Adrenal gland (tissue), 19 donors: ENCODE measurements at regions of chr14 and their contacts with region 1.

Region 1: DNA sequence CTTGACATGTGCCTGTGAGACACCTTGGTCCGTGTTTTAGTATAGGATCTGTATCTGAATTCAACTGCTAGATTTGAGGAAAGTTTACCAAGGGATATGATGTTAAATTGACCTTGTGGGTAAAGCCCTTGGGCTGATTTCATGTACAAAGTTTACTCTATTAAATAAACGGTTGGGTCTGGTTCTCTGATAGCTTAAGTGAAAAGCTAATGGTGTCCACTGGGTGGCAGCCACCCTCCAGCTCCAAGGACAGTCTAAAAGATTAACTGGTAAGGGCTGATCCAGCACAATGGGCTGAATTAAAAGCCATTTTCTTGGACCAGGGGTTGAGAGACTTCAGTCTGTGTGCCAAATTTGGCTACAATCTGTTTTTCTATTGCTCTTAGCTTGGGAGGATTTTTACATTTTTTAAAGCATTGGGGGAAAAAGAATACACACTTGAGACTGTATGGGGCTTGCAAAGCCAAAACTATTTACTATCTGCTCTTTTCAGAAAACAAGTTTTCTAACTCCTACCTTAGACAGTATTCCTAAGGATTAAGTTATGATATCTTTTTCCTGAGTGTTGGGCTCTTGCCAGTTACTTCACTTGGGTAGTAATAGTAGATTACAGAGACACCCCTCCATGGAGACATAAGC is 116.5 kb downstream of the GPHN start:
- DNase-seq: peak; percentile 48 to 84 (median 63)
- H3K4me3 ChIP-seq: no peak overlapping the region
- H3K27ac ChIP-seq: no peak overlapping the region
- H3K4me1 ChIP-seq: no peaks in the 10 kb centered on the region
- H3K27me3 ChIP-seq: no peaks in the 10 kb centered on the region
- CTCF ChIP-seq: peak; percentile 57 to 72 (median 67)
- POLR2A ChIP-seq: no peak

Region 2: DNA sequence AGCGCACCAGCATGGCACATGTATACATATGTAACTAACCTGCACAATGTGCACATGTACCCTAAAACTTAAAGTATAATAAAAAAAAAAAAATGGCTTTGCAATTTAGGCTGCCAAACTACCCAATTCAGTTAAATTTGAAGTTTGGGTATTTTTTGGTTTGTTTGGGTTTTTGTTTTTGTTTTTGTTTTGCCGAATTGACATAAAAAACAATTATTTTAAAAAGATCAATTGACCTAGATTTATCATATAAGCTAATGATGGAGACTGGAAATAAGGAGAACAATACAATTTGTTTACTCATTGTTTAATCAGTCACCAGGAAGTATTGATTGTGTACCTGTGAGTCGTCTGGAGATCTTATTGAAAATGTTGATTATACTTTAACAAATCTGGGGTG is 502.8 kb after region 1 on chr14:
- intact Hi-C with region 1: loop called in 1 of 2 experiments (anchors 10 kb)
- DNase-seq: no peak
- H3K4me3 ChIP-seq: no peak overlapping the region
- H3K27ac ChIP-seq: no peak overlapping the region
- H3K4me1 ChIP-seq: no peaks in the 10 kb centered on the region
- H3K27me3 ChIP-seq: no peaks in the 10 kb centered on the region
- CTCF ChIP-seq: no peak
- POLR2A ChIP-seq: no peak